H1 (cell line): ENCODE measurements at regions of chr12 and their contacts with region 1.

Region 1: GRCh38 chr12:81610955-81611889 is 147.9 kb downstream of the PPFIA2 start:
- DNase-seq: peak in 1 of 2 experiments; percentile 45
- H3K4me3 ChIP-seq: no peak overlapping the region
- H3K27ac ChIP-seq: no peak overlapping the region
- H3K4me1 ChIP-seq: no peaks in the 10 kb centered on the region; a peak in 1 of 7 replicates
- H3K27me3 ChIP-seq: no peaks in the 10 kb centered on the region
- CTCF ChIP-seq: peak in 2 of 3 experiments; percentile 32 to 47; a peak in 2 of 4 replicates
- EP300 ChIP-seq: no peak
- POLR2A ChIP-seq: no peak
- RAD21 ChIP-seq: peak; percentile 57

Region 2: DNA sequence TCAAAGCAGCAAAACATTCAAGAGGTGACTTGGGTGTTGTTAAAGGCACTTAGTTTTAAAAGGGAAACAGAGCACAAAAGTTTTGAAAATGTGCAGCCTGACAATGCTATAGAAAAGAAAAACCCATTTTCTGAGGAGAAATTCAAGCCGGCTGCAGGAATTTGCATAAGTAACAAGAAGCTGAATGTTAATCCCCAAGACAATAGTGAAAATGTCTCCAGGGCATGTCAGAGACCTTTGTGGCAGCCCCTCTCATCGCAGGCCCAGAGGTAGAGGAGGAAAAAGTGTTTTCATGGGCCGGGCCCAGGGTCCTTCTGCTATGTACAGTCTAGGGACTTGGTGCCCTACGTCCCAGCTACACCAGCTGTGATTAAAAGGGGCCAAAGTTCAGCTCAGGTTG is 20.0 kb before region 1 on chr12:
- CTCF ChIA-PET with region 1: interaction called, 14 read pairs
- POLR2A ChIA-PET with region 1: no interaction called
- DNase-seq: no peak
- H3K4me3 ChIP-seq: no peak overlapping the region
- H3K27ac ChIP-seq: no peak overlapping the region
- H3K4me1 ChIP-seq: no peaks in the 10 kb centered on the region
- H3K27me3 ChIP-seq: no peaks in the 10 kb centered on the region
- CTCF ChIP-seq: no peak
- EP300 ChIP-seq: no peak
- POLR2A ChIP-seq: no peak
- RAD21 ChIP-seq: no peak

Region 3: DNA sequence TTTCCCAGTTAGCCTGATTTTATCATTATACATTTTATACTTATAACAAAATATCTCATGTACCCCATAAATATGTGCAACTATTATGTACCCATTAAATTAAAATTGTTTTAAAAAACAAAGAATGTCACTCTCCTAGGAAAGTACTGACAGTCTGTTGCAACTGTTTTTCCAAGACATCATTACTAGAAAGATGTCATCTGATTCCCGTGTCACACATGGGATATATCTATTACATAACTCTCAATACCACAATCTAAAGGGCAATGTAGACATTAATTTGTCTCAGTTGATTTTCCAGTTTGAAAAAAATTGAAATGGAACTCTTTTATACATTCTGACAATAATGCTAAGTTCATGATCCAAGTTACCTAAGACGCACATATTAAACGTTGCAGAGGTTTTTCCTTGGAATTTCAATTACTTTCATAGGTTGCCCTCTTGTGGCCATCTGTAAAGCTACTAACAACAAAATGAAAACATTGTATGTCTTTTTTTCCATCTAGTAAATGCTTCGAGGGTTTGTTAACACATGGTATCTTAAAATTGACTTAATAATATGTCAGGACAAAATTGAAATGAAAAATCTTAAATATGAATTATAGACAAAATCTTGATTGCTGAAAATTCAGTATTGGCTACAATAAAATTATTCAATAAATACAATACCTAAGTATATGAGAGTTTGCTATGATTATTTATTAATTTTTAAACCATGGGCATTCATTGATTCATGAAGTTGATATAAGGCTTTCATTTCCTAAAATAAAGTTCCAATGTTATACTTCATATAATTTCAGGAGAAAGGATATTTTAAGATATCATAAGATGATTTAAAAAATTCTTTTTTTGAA is 16.3 kb after region 1 on chr12:
- CTCF ChIA-PET with region 1: interaction called, 21 read pairs
- POLR2A ChIA-PET with region 1: interaction called, 3 read pairs
- DNase-seq: no peak
- H3K4me3 ChIP-seq: no peak overlapping the region
- H3K27ac ChIP-seq: no peak overlapping the region
- H3K4me1 ChIP-seq: no peaks in the 10 kb centered on the region
- H3K27me3 ChIP-seq: no peaks in the 10 kb centered on the region
- CTCF ChIP-seq: peak in 2 of 3 experiments; percentile 34 to 54; a peak in 2 of 4 replicates
- EP300 ChIP-seq: no peak
- POLR2A ChIP-seq: no peak
- RAD21 ChIP-seq: peak; percentile 68 to 70